Mammary epithelial cell (primary cell): ENCODE measurements at regions of chr7 and their contacts with region 1.

Region 1: GRCh38 chr7:131040467-131040932 is 287.2 kb upstream of the MKLN1 start:
- DNase-seq: peak; percentile 48
- H3K4me3 ChIP-seq: no peak overlapping the region
- H3K27ac ChIP-seq: peak overlapping the region; percentile 63
- H3K4me1 ChIP-seq: peaks cover 8% of the 10 kb centered on the region
- H3K27me3 ChIP-seq: no peaks in the 10 kb centered on the region
- CTCF ChIP-seq: peak; percentile 93 to 97

Region 2: DNA sequence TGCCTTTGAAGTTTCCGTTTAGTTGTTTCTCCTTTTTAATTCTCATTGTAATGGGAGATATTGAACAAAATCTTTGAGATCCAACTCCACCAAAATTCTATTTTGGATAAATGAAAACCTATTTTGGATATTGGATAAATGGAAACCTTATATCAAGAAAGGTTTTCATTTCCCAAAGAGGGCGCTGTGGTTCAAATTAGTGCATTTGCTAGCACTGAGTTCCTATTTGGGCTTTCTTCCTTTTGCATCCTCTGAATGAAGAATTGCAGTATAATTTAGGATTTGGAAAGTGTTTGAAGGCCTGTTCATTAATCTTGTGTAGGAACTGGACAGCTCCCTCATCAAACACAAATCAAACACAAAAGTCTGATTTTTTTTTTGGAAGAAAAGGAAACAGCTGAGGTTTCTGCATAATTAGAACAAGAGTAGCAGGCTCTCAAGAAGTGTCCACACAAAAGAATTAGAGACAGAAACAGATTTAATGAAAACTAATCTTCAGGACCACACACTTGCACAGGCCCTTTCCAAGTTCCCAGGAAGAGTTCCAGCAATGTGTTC is 225.6 kb before region 1 on chr7:
- CTCF ChIA-PET with region 1: no interaction called
- dilution Hi-C with region 1: no loop called
- in situ Hi-C with region 1: no loop called
- intact Hi-C with region 1: loop called (anchors 1 kb)
- DNase-seq: peak; percentile 20
- H3K4me3 ChIP-seq: no peak overlapping the region
- H3K27ac ChIP-seq: no peak overlapping the region
- H3K4me1 ChIP-seq: no peaks in the 10 kb centered on the region
- H3K27me3 ChIP-seq: no peaks in the 10 kb centered on the region
- CTCF ChIP-seq: peak; percentile 49 to 64

Region 3: DNA sequence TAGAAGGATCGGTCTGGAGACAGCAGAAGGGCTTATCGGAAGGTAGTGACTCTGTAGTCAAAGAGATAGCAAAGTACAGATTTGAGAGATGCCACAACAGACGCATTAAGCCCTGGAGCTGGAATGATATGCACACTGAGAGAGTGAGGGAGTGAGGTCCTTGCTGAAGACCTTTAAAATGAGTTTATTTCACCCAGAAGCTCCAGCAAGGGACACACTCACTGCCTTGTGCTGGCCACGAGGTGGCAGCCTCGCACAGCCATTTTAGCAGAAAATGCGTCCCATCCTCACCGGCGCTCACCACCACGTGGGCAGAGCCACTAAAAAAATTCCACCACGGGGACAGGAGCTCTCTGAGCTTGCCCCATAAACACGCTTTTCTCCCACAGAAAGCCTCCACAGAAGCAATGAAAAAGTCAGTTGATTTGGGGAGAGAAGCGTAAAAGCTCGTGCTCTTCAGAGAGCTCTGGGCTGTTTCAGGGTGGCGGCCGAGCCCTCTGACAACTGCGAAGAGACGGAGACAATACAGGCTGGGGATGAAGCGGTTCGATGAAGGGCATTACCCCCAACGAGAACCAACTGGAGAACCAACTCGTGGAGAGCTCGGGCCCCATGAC is 143.5 kb before region 1 on chr7:
- CTCF ChIA-PET with region 1: interaction called, 3 read pairs
- dilution Hi-C with region 1: no loop called
- in situ Hi-C with region 1: loop called in 1 of 2 experiments (anchors 10 kb)
- intact Hi-C with region 1: loop called (anchors 1 kb)
- DNase-seq: no peak
- H3K4me3 ChIP-seq: no peak overlapping the region
- H3K27ac ChIP-seq: no peak overlapping the region
- H3K4me1 ChIP-seq: peaks cover 83% of the 10 kb centered on the region
- H3K27me3 ChIP-seq: no peaks in the 10 kb centered on the region
- CTCF ChIP-seq: peak; percentile 76 to 80

Region 4: GRCh38 chr7:130904031-130904757 is 136.3 kb before region 1 on chr7:
- CTCF ChIA-PET with region 1: no interaction called
- dilution Hi-C with region 1: no loop called
- in situ Hi-C with region 1: loop called in 1 of 2 experiments (anchors 10 kb)
- intact Hi-C with region 1: loop called (anchors 2 kb)
- DNase-seq: peak; percentile 95
- H3K4me3 ChIP-seq: no peak overlapping the region
- H3K27ac ChIP-seq: peak overlapping the region; percentile 98
- H3K4me1 ChIP-seq: peaks cover 75% of the 10 kb centered on the region
- H3K27me3 ChIP-seq: no peaks in the 10 kb centered on the region
- CTCF ChIP-seq: no peak

Region 5: GRCh38 chr7:131007394-131008330 is 32.8 kb before region 1 on chr7:
- CTCF ChIA-PET with region 1: interaction called, 3 read pairs
- dilution Hi-C with region 1: no loop called
- in situ Hi-C with region 1: no loop called
- intact Hi-C with region 1: loop called (anchors 2 kb)
- DNase-seq: peak; percentile 73
- H3K4me3 ChIP-seq: no peak overlapping the region
- H3K27ac ChIP-seq: peak overlapping the region; percentile 66
- H3K4me1 ChIP-seq: peaks cover 36% of the 10 kb centered on the region
- H3K27me3 ChIP-seq: no peaks in the 10 kb centered on the region
- CTCF ChIP-seq: peak; percentile 37 to 67